Transverse colon (tissue), 4 donors: ENCODE measurements at regions of chr18 and their contacts with region 1.

Region 1: DNA sequence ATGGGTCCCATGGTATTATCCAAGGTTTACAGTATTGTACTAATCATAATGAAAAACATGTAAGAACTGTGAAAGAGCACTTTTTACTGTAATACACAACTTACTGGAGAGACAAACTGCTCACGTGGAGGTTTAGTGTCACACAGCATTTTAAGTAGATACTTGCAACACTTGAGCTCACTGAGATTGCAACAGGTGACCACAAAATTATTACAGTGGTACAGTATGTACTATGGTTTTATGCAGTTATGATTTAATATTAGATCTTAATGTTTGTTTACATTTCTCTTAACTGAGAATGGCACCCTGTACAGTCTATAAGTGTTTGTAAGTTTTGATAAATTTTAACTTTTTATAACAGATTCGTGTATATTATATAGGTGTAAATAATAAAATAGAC is 118.6 kb upstream of the SKOR2 start:
- DNase-seq: no peak
- H3K4me3 ChIP-seq: no peak overlapping the region
- H3K27ac ChIP-seq: no peak overlapping the region
- H3K4me1 ChIP-seq: no peaks in the 10 kb centered on the region
- H3K27me3 ChIP-seq: no peaks in the 10 kb centered on the region
- CTCF ChIP-seq: no peak
- EP300 ChIP-seq: no peak
- POLR2A ChIP-seq: no peak

Region 2: DNA sequence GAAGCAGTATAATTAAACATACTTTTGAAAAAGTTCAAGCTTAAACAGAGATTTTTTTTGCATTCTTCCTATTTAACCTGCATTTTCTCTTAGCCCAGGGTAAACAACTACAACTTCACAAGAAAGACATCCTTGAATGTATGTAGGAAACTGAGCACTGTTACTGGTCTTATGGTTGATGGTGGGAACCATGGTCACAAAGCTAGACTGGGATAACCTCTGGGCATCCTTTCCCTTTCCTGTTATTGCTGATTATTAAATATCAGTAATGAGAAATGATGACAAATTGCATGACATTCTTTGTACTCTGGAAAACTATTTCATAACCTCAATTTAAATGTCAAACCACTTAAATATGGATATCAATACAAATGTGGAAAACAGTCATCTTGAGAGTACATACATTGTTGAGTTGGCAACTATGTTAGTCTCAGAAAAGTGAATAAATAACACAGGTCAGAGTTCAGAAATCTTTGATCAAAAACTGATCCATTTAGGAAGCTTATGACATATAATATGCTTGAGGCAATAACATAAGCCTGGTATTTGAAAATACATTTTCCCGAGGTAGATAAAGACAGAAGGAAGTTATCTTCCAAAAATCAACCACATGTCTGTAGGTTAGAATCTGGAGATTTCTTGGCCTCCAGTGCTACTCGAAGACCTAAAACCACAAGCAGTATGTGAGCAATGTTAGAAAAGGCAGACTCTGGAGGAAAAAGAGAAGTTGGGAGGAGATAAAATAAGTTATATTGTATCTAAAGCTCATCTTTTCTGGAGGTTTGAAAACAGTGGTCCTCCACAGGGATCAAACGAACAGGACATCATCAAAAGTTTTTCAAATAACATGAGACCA is 548.0 kb before region 1 on chr18:
- in situ Hi-C with region 1: no loop called
- intact Hi-C with region 1: no loop called
- DNase-seq: no peak
- H3K4me3 ChIP-seq: no peak overlapping the region
- H3K27ac ChIP-seq: no peak overlapping the region
- H3K4me1 ChIP-seq: no peaks in the 10 kb centered on the region
- H3K27me3 ChIP-seq: no peaks in the 10 kb centered on the region
- CTCF ChIP-seq: no peak
- EP300 ChIP-seq: no peak
- POLR2A ChIP-seq: no peak

Region 3: GRCh38 chr18:47095810-47096209 is 274.2 kb before region 1 on chr18:
- in situ Hi-C with region 1: no loop called
- intact Hi-C with region 1: no loop called
- DNase-seq: no peak
- H3K4me3 ChIP-seq: no peak overlapping the region
- H3K27ac ChIP-seq: no peak overlapping the region
- H3K4me1 ChIP-seq: no peaks in the 10 kb centered on the region
- H3K27me3 ChIP-seq: no peaks in the 10 kb centered on the region
- CTCF ChIP-seq: no peak
- EP300 ChIP-seq: no peak
- POLR2A ChIP-seq: no peak

Region 4: GRCh38 chr18:47254341-47254939 is 115.6 kb before region 1 on chr18:
- in situ Hi-C with region 1: loop called in 1 of 4 experiments (anchors 25 kb)
- intact Hi-C with region 1: no loop called
- DNase-seq: no peak
- H3K4me3 ChIP-seq: no peak overlapping the region
- H3K27ac ChIP-seq: no peak overlapping the region
- H3K4me1 ChIP-seq: peaks cover 0 to 3% (median 0%) of the 10 kb centered on the region in 4 donors
- H3K27me3 ChIP-seq: peaks cover 93% of the 10 kb centered on the region
- CTCF ChIP-seq: no peak
- EP300 ChIP-seq: no peak
- POLR2A ChIP-seq: no peak

Region 5: GRCh38 chr18:47313901-47314300 is 56.2 kb before region 1 on chr18:
- in situ Hi-C with region 1: loop called in 1 of 4 experiments (anchors 10 kb)
- intact Hi-C with region 1: no loop called
- DNase-seq: no peak
- H3K4me3 ChIP-seq: no peak overlapping the region
- H3K27ac ChIP-seq: no peak overlapping the region
- H3K4me1 ChIP-seq: no peaks in the 10 kb centered on the region
- H3K27me3 ChIP-seq: no peaks in the 10 kb centered on the region
- CTCF ChIP-seq: no peak
- EP300 ChIP-seq: no peak
- POLR2A ChIP-seq: no peak

Region 6: DNA sequence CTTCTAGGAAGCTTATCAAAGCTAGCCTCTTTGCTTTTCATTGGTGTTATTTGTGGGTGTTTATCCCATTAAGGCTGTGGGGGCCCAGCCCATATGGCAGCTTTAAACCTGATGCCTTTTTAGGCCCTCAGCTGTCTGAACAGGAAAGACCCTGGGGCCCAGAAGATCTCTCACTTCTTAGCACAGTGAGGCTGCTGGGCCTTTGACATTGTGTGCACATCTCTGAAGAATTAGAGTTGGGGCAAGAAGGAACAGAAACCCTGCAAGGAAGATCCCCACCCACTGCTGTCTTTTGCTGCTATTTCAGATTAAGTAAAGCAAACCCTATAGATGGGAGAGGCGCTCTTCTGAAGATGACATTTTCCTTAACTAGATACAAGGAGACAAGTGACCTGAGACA is 310.4 kb after region 1 on chr18:
- in situ Hi-C with region 1: no loop called
- intact Hi-C with region 1: no loop called
- DNase-seq: no peak
- H3K4me3 ChIP-seq: no peak overlapping the region
- H3K27ac ChIP-seq: no peak overlapping the region
- H3K4me1 ChIP-seq: no peaks in the 10 kb centered on the region
- H3K27me3 ChIP-seq: no peaks in the 10 kb centered on the region
- CTCF ChIP-seq: no peak
- EP300 ChIP-seq: no peak
- POLR2A ChIP-seq: no peak